Posterior vena cava (tissue), 2 donors: ENCODE measurements at regions of chr1 and their contacts with region 1.

Region 1: DNA sequence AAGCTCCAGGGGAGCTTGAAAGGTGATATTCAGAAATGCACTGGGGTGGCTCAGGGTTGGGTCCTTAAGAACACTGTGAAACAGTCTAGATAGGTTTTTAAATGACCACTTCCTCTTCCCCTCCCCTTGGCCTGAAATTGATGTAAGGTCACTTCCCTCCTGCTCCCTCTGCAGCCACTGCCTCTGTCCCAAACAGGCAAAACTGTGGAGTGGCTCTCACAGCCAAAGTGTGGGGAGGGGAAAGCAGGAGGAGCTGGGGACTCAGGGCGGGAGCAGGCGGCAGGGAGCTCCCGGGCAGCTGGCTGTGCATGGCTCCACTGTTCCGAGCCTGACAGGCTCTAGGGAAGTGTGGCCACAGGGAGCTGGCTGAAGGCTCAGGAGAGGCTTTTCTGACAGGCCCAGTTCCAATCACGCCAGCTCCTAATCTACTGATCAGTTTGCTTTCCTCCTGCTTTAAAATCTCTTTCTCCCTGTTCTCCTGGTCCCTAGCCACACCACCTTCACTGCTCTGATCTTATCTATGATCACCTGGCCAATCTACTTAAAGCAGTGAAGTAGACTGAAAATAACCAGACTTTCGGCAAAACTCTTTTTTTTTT is 5.1 kb upstream of the CSRP1 start:
- DNase-seq: peak; percentile 85

Region 2: DNA sequence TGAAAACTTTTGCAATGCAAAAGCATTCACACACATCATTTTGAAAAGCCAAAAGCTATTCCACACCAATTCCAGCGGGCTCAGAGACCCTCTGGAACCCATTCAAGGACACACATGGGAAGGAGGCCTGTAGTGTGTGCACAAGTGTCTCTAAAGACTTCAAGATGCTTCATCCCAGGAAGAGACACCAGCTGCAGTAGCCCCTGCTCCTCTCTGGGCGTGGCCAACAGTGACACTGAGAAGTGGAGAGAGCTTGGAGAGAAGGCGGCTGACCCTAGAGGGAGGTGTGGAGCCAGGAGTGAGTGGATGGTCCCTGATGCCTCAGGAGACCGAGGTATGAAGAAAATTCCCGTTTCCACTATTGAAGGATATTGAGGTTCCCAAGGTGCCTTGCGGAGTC is 75.6 kb before region 1 on chr1:
- intact Hi-C with region 1: loop called in 1 of 2 experiments (anchors 2 kb)
- DNase-seq: no peak

Region 3: DNA sequence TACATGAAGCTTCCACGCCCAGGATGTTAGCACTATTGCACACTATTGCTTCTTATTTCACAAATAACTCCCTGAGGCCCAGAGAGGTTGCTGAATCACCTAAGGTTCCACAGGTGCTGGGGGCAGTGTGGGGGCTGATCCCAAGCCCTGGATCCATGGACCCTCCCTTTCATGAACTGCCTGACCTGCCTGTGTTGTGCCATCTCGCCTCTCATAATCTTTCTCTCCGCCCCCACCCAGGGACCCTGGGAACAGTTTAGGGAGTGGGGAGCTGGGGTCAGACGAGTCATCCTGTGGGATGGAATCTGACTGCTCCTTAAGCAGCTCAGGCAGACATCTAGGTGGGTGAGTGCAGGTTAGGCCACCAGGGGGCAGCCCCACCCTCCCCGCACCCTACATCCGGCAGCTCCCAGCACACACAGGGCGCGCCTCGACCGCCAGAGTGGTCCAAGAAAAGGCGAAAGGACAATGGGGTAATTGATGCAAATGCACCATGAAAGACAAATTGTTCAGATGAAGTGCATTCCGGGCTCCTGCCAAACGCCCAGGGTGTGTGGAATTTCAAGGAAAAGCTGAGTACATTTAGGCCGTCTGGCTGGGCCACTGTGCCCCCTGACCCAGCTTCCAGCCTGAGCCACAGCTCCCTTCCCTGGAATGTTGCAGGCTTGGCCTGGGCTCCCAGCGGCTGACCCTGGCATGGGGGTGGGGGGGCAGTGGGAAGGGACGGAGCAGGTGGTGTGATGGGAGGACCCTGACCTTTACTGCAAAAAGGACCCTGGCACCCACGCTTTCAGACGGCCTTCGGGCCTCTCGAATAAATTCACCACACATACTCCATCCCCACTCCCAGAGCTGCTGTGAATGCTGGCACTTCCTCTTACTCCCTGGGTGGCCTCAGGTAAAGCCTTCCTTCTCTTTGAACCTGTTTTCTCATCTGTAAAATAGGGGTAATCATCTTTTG is 63.8 kb before region 1 on chr1:
- intact Hi-C with region 1: loop called in 1 of 2 experiments (anchors 2 kb)
- DNase-seq: peak; percentile 92

Region 4: GRCh38 chr1:201468844-201469511 is 43.1 kb before region 1 on chr1 and contains the start of gene PHLDA3:
- intact Hi-C with region 1: loop called in 1 of 2 experiments (anchors 10 kb)
- DNase-seq: peak; percentile 96
- total RNA-seq, gene PHLDA3: 55.0 to 57.4 TPM

Region 5: GRCh38 chr1:201481761-201482493 is 30.1 kb before region 1 on chr1:
- intact Hi-C with region 1: loop called in 1 of 2 experiments (anchors 2 kb)
- DNase-seq: peak; percentile 95

Region 6: GRCh38 chr1:203440771-203441170 is 1928.7 kb after region 1 on chr1:
- intact Hi-C with region 1: no loop called
- DNase-seq: peak; percentile 92